Heart left ventricle (tissue), 16 donors: ENCODE measurements at regions of chr12 and their contacts with region 1.

Region 1: DNA sequence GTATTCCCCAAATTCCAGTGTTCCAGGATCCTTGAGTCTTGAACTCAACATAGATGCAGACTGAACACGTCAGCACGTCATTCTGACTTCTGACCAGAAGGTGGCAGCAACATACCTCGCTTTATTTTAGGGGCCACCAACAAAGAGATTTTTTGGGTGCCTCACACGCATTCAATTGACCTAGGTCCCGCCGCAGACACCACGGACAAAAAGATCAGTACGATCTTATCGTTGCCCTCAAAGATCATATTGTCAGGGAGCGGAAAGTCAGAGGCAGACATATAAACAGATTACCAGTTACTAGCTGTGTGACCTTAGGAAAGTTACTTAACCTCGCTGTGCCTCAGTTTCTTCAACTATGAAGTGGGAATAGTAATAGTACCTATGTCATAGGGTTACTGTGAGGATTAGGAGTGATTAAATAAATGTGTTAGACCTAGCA is 6.5 kb upstream of the PRPH start:
- DNase-seq: peak in 2 of 5 donors; percentile 40 to 41
- ATAC-seq: peak in 2 of 4 donors; percentile 44 to 54
- H3K4me3 ChIP-seq: no peak overlapping the region
- H3K27ac ChIP-seq: no peak overlapping the region
- H3K4me1 ChIP-seq: peaks cover 0 to 9% (median 6%) of the 10 kb centered on the region in 12 donors
- H3K27me3 ChIP-seq: peaks cover 0 to 28% (median 3%) of the 10 kb centered on the region in 9 donors
- CTCF ChIP-seq: peak; percentile 73 to 89 (median 82)
- POLR2A ChIP-seq: no peak

Region 2: DNA sequence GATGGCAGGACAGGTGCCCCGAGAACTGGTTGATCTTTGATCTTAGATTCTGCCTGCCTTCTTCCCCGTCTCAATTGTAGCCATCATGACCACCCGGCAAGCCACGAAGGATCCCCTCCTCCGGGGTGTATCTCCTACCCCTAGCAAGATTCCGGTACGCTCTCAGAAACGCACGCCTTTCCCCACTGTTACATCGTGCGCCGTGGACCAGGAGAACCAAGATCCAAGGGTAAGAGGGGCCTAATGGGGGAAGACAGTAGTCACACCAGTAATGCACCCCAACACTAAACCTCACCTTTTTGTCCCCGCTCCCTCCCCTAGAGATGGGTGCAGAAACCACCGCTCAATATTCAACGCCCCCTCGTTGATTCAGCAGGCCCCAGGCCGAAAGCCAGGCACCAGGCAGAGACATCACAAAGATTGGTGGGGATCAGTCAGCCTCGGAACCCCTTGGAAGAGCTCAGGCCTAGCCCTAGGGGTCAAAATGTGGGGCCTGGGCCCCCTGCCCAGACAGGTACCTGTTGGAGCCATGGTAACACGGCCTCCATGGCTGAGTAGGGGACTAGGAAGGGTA is 35.2 kb after region 1 on chr12:
- intact Hi-C with region 1: no loop called
- DNase-seq: no peak
- ATAC-seq: no peak
- H3K4me3 ChIP-seq: peak overlapping the region in 11 of 12 donors; percentile 28 to 77 (median 68)
- H3K27ac ChIP-seq: no peak overlapping the region
- H3K4me1 ChIP-seq: peaks cover 0 to 16% (median 9%) of the 10 kb centered on the region in 12 donors
- H3K27me3 ChIP-seq: no peaks in the 10 kb centered on the region
- CTCF ChIP-seq: no peak
- POLR2A ChIP-seq: no peak

Region 3: GRCh38 chr12:49336645-49337584 is 48.5 kb after region 1 on chr12 and contains the start of gene C1QL4:
- intact Hi-C with region 1: loop called in 8 of 10 experiments (anchors 2 to 5 kb)
- DNase-seq: peak; percentile 80 to 92 (median 85)
- ATAC-seq: peak; percentile 59 to 91 (median 84)
- H3K4me3 ChIP-seq: peak within 1 kb of the TSS; percentile 5 to 50 (median 38)
- H3K27ac ChIP-seq: no peak within 1 kb of the TSS
- H3K4me1 ChIP-seq: peaks cover 0 to 26% (median 7%) of the 10 kb centered on the region in 12 donors
- H3K27me3 ChIP-seq: peaks cover 29 to 89% (median 53%) of the 10 kb centered on the region in 9 donors
- CTCF ChIP-seq: peak; percentile 93 to 99 (median 98)
- POLR2A ChIP-seq: no peak
- total RNA-seq, gene C1QL4: not detected

Region 4: DNA sequence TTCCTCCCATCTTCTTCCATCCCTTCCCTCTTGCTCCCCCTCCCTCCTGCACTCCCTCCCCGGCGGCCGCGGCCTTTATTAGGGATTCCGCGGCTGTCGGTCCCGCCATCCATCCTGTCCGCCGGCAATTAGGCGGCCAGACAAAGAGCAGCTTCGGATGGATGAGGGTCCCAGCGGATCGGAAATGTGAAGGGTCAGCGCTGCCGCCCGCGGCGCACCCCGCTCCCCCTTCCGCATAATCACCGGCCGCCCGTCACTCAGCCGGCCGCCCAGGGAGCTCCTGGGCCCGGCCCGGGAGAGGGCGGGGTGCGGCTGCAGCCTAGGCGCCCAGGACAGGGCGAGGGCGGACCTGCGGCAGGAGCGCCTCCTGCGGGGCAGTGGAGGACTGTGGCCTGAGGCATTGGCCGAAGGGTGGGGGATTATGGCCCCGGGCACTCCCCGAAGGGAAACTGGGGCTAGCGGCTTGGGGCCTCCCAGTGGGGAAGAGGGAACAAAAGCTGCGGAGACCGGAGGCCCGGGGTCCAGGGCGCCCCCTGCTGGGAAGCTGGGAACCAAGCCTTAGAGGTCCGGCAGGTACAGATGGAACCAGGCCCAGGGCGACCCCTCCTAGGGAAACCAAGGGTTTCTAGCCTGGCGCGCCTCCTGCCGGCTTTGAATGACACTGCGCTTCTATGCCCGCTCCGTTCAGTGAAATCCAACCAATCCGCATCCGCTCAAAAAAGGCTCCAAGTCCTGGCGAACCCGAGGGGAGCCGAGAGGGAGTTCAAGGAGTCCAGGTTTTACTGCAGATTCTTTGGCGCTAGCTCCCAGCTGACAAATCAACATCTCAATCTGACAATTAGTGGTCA is 53.9 kb after region 1 on chr12:
- intact Hi-C with region 1: loop called in 9 of 10 experiments (anchors 2 to 5 kb)
- DNase-seq: peak; percentile 62 to 88 (median 75)
- ATAC-seq: peak; percentile 20 to 69 (median 59)
- H3K4me3 ChIP-seq: peak overlapping the region; percentile 4 to 62 (median 51)
- H3K27ac ChIP-seq: no peak overlapping the region
- H3K4me1 ChIP-seq: peaks cover 12 to 53% (median 40%) of the 10 kb centered on the region in 12 donors
- H3K27me3 ChIP-seq: peaks cover 30 to 86% (median 60%) of the 10 kb centered on the region in 9 donors
- CTCF ChIP-seq: peak in 11 of 12 donors; percentile 66 to 91 (median 84)
- POLR2A ChIP-seq: no peak

Region 5: GRCh38 chr12:49347384-49348237 is 59.2 kb after region 1 on chr12:
- intact Hi-C with region 1: loop called in 3 of 10 experiments (anchors 5 kb)
- DNase-seq: peak; percentile 80 to 89 (median 82)
- ATAC-seq: peak; percentile 78 to 93 (median 87)
- H3K4me3 ChIP-seq: peak overlapping the region; percentile 7 to 57 (median 44)
- H3K27ac ChIP-seq: no peak overlapping the region
- H3K4me1 ChIP-seq: peaks cover 10 to 50% (median 43%) of the 10 kb centered on the region in 12 donors
- H3K27me3 ChIP-seq: peaks cover 28 to 93% (median 56%) of the 10 kb centered on the region in 9 donors
- CTCF ChIP-seq: peak; percentile 91 to 99 (median 96)
- POLR2A ChIP-seq: no peak

Region 6: DNA sequence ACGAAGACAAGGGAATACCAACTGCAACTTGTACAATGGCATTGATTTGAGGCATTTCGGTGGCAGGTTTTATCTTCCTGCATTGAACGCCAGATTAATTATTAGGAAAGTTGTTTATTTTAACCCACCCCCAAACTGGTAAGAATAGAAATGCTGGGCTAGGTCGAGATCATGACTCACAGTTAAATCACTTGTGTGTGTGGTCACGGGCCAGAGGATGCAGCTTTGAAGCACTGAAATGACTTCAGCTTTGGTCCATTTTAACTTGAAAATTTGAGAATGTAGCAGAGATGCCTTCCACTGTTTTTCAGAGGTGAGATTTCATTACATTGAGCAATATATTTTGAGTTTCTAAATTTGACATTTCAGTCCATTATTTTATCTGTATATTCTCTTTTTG is 226.8 kb after region 1 on chr12:
- intact Hi-C with region 1: loop called in 2 of 10 experiments (anchors 5 to 10 kb)
- DNase-seq: no peak
- ATAC-seq: no peak
- H3K4me3 ChIP-seq: no peak overlapping the region
- H3K27ac ChIP-seq: no peak overlapping the region
- H3K4me1 ChIP-seq: peaks cover 0 to 3% (median 0%) of the 10 kb centered on the region in 12 donors
- H3K27me3 ChIP-seq: no peaks in the 10 kb centered on the region
- CTCF ChIP-seq: no peak
- POLR2A ChIP-seq: no peak